Ascending aorta (tissue), 2 donors: ENCODE measurements at regions of chr15 and their contacts with region 1.

Region 1: GRCh38 chr15:53976844-53977392 is 1.3 kb upstream of the UNC13C start:
- DNase-seq: peak in 1 of 2 donors; percentile 67
- H3K4me3 ChIP-seq: peak overlapping the region in 1 of 2 donors; percentile 65
- H3K27ac ChIP-seq: peak overlapping the region; percentile 69 to 74
- H3K4me1 ChIP-seq: no peaks in the 10 kb centered on the region
- H3K27me3 ChIP-seq: no peaks in the 10 kb centered on the region
- CTCF ChIP-seq: peak in 2 of 3 experiments; percentile 60 to 68

Region 2: DNA sequence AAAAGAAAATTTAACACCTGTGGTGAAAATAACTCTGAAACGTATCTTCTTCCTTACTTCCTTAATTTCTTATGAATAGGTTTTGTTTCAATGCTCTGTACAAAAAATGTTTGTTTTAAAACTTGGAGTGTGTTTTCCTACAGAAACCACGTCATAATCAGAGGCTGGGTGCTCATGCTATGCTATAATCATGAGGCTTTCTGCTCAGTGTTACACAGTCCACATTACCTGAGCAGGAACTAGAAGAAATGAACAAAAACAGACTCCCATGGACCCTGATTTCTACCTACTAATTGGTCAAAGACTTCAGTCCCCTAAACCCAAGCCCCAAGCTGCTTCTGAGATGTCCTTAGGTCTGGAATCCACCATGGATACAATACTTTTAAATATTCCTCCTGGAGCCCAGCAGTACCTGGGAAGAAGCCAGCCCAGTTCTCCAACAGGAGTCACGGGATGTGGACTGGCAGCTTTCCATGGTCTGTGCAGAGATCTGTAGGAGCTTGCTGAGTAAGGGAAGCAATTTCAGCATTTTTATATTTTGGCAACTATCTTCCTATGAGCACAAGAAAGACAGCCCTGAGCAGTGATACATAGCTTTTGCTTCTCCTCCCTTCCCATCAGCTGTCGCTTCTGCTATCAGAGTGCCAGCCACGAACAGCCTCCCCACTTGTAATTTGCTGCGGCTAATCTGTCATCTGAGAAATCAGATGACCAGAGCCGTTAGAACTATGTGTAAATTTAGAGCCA is 283.0 kb before region 1 on chr15:
- intact Hi-C with region 1: no loop called
- DNase-seq: no peak
- H3K4me3 ChIP-seq: no peak overlapping the region
- H3K27ac ChIP-seq: no peak overlapping the region
- H3K4me1 ChIP-seq: no peaks in the 10 kb centered on the region
- H3K27me3 ChIP-seq: no peaks in the 10 kb centered on the region
- CTCF ChIP-seq: no peak

Region 3: DNA sequence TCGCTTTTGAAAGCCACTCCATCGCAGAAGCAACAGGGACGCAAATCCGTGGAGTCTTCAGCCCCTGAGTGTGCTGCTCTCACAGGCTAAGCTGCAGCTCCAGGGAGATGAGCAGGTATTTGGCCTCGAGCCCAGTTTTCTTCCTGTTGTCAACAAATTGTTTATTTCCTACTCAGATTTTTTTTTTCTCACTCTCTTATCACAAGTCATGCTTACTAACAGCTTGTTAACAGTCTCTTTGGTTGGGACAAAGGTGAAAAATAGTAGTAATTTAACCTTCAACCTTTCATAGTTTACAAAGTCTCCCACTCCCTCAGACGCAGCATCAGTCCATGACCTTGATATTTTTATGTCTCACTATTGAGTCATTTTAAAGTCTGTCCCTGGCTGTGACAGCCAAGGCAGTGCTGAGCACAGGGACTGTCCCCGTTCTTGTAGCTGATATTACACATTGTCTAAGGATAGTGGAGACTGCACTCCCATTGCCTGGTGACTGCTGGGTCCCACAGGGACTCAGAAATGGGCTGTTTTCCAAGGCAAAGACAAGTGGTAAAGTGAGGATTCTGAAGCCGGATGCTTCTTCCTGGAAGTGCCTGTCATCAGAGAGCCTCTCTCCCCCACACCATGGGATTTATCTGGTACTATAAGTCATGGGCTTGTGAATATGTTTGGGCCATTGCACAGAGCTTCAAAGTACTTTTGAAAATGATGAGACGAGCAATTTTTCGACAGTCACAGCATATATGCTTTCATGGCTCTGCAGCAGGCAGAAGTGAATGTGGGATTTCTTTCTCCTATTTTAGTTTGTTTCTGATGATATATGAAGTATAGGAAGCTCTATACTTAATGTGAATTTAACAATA is 58.5 kb before region 1 on chr15:
- intact Hi-C with region 1: no loop called
- DNase-seq: no peak
- H3K4me3 ChIP-seq: no peak overlapping the region
- H3K27ac ChIP-seq: no peak overlapping the region
- H3K4me1 ChIP-seq: no peaks in the 10 kb centered on the region
- H3K27me3 ChIP-seq: no peaks in the 10 kb centered on the region
- CTCF ChIP-seq: no peak

Region 4: DNA sequence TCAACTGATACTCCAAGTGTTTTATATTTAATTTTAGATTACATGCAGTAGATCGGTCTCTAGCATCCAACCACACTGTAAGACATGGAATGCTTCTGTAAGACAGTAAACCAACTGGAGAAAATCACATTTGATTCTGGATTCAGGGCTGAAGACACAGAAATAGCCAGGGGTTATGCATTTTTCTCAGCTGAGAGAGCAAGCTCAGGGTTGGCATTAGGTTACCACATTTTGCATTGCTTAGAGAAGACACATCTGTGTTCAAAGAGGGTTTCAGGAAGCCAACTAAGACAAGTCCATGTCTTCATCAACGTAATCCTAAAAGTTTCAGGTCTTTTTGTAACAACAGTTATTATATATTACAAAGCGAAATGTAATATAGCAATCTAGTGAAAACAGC is 26.3 kb before region 1 on chr15:
- intact Hi-C with region 1: no loop called
- DNase-seq: no peak
- H3K4me3 ChIP-seq: no peak overlapping the region
- H3K27ac ChIP-seq: no peak overlapping the region
- H3K4me1 ChIP-seq: no peaks in the 10 kb centered on the region
- H3K27me3 ChIP-seq: no peaks in the 10 kb centered on the region
- CTCF ChIP-seq: no peak

Region 5: DNA sequence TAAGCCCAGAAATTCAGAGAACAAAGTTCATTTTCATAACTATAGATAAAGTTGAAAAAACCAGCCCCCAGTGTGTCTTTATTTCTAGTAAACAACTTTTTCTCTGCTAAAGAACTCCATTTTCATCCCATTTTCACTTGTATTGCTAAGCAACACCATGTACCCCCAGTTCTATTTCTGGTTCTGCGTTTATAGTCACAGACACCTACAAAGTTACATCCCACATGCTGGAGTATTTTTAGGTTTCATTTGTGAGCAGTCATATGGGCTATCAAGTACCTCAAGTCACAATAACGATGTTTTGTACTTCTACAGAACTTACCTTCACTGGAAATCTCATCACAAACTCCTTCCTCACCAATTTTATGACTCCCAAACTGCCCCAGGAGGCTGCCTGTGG is 983.3 kb after region 1 on chr15:
- intact Hi-C with region 1: loop called (anchors 10 kb)
- DNase-seq: no peak
- H3K4me3 ChIP-seq: no peak overlapping the region
- H3K27ac ChIP-seq: peak overlapping the region; percentile 84 to 88
- H3K4me1 ChIP-seq: peaks cover 7 to 25% of the 10 kb centered on the region in 2 donors
- H3K27me3 ChIP-seq: no peaks in the 10 kb centered on the region
- CTCF ChIP-seq: no peak

Region 6: DNA sequence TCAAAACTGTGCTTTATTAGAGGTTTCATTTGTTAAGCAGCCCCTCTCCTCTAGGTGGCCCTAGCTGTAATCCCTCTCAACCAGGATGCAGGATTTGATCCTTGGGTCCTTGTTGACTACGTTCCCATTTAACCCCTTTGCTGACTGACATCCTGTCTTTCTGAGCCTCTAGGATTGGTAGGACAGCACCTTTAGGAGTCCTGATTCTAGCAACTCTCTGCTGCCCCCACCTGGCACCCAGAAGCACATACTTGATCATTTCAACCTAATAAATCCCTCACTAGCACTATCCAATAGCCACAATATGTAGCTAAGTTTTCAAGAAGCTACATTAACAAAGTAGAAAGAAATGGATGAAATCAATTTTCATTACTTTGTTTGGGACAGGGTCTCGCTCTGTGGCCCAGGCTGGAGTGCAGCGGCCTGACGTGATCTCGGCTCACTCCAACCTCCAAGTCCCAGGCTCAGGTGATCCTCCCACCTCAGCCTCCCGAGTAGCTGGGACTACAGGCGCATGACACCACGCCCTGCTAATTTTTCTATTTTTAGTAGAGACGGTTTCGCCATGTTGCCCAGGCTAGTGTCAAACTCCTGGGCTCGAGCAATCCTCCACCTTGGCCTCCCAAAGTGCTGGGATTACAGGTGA is 1191.5 kb after region 1 on chr15:
- intact Hi-C with region 1: loop called (anchors 10 kb)
- DNase-seq: no peak
- H3K4me3 ChIP-seq: no peak overlapping the region
- H3K27ac ChIP-seq: no peak overlapping the region
- H3K4me1 ChIP-seq: no peaks in the 10 kb centered on the region
- H3K27me3 ChIP-seq: no peaks in the 10 kb centered on the region
- CTCF ChIP-seq: peak; percentile 50 to 84 (median 62)

Region 7: DNA sequence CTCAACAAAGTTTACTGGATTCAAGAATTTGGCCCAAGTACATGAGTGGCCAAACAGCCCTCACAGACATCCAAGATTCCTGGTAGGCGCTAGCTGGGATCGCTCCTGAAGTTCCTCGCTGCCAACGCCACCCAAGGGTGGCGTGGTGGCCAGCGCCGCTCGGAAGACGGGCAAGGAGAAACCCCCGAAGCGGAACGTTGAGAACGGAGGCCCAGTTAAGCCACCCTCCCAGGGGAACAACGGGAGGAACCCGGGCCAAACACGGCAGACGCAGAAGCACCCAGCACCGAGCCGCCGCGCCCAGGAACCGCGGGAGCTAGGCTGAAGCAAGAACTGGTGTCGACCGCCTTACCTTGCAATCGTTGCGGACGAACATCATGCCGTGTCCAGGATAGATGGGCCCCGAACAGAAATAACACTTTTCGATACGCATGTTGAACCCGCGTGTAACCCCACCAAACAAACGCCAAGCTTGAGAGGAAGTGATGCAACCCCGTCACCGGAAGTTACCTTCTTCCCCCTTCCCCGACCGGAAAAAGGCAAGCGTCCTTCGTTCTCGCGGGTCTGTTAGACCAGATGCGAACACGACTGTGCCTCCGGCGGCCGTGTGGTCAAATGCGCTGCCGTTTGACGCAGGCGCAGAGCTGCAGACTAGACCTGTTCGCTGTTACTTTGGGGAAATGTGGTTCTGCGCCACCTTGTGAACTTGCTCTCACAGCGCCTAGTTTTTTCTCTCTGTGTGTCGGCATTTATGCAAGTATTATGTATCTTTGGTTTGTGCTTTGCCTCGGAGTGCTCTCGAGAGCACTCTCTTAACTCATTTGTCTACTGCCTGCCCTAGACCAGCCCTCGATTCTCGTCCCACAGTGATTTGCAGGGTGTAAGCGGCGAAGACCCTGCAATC is 1219.8 kb after region 1 on chr15 and contains the start of gene RSL24D1:
- intact Hi-C with region 1: loop called (anchors 10 kb)
- DNase-seq: peak; percentile 87 to 99
- H3K4me3 ChIP-seq: peak within 1 kb of the TSS; percentile 82 to 95
- H3K27ac ChIP-seq: peak within 1 kb of the TSS; percentile 90 to 96
- H3K4me1 ChIP-seq: peaks cover 4 to 14% of the 10 kb centered on the region in 2 donors
- H3K27me3 ChIP-seq: no peaks in the 10 kb centered on the region
- CTCF ChIP-seq: peak; percentile 48 to 57 (median 49)
- total RNA-seq, gene RSL24D1: 15.3 TPM

Region 8: GRCh38 chr15:55290528-55291057 is 1313.7 kb after region 1 on chr15:
- intact Hi-C with region 1: loop called (anchors 10 kb)
- DNase-seq: peak; percentile 40 to 92
- H3K4me3 ChIP-seq: peak overlapping the region; percentile 60 to 95
- H3K27ac ChIP-seq: peak overlapping the region; percentile 90 to 96
- H3K4me1 ChIP-seq: peaks cover 0 to 7% of the 10 kb centered on the region in 2 donors
- H3K27me3 ChIP-seq: no peaks in the 10 kb centered on the region
- CTCF ChIP-seq: peak; percentile 85 to 93 (median 87)